Activated CD8-positive, alpha-beta T cell treated with anti-CD3 and anti-CD28 coated beads for 36 hours (primary cell): ENCODE measurements at regions of chr13 and their contacts with region 1.

Region 1: DNA sequence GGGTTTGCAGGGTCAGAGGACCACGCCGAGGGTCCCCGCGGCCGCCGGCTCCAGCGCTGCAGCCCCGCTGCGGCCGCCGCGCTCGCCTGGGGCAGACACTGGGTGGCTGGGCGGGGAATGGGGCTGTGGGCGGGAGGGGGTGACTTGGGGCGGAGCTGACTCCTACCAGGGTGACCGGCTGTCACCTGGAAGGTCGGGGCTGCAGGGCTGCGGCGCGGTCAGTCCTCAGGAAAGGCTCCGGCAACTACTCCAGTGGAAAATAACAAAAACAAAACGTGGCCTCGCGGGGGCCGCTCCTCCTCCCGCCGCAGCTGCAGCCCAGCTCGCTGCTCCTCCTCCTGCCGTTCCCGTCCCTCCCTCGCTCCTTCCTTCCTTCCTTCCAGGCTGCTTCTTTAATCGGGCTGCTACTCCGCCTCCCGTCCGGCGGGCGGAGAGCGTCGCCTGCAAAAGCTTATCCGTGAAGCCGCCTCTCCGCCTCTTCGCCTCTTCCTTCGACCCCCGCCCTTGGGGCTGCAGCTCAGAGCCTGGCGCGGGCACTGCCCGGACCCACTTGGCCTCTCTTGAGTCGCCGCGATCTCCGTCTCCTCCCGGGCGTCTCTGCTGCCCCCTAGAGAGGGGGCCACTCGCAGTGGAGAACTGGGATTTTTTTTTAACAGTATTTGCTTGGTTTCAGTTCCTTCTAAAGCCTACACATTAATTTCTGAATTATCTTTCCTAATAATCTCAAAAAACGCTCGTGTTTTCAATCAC is at the start of gene TBC1D4:
- DNase-seq: peak; percentile 79
- ATAC-seq: peak; percentile 81
- H3K4me3 Mint-ChIP-seq: peak within 1 kb of the TSS; percentile 91
- H3K27ac Mint-ChIP-seq: peak within 1 kb of the TSS; percentile 28
- H3K4me1 Mint-ChIP-seq: peaks cover 19% of the 10 kb centered on the region
- H3K27me3 Mint-ChIP-seq: peaks cover 50% of the 10 kb centered on the region
- CTCF ChIP-seq: peak; percentile 75
- total RNA-seq, gene TBC1D4: 50.4 to 53.3 TPM

Region 2: GRCh38 chr13:75365724-75366173 is 116.5 kb before region 1 on chr13:
- CTCF ChIA-PET with region 1: interaction called, 4 read pairs
- POLR2A ChIA-PET with region 1: no interaction called
- intact Hi-C with region 1: loop called (anchors 5 kb)
- DNase-seq: peak; percentile 51
- ATAC-seq: peak; percentile 94
- H3K4me3 Mint-ChIP-seq: peak overlapping the region; percentile 58
- H3K27ac Mint-ChIP-seq: peak overlapping the region; percentile 94
- H3K4me1 Mint-ChIP-seq: peaks cover 49% of the 10 kb centered on the region
- H3K27me3 Mint-ChIP-seq: no peaks in the 10 kb centered on the region
- CTCF ChIP-seq: no peak

Region 3: GRCh38 chr13:75549262-75550158 is 67.3 kb after region 1 on chr13 and contains the start of gene UCHL3:
- CTCF ChIA-PET with region 1: interaction called, 8 read pairs
- POLR2A ChIA-PET with region 1: no interaction called
- intact Hi-C with region 1: loop called (anchors 5 kb)
- DNase-seq: peak; percentile 98
- ATAC-seq: peak; percentile 96
- H3K4me3 Mint-ChIP-seq: peak within 1 kb of the TSS; percentile 92
- H3K27ac Mint-ChIP-seq: peak within 1 kb of the TSS; percentile 97
- H3K4me1 Mint-ChIP-seq: peaks cover 41% of the 10 kb centered on the region
- H3K27me3 Mint-ChIP-seq: no peaks in the 10 kb centered on the region
- CTCF ChIP-seq: peak; percentile 90
- total RNA-seq, gene UCHL3: 32.9 to 36.4 TPM

Region 4: GRCh38 chr13:75749407-75749806 is 267.2 kb after region 1 on chr13:
- CTCF ChIA-PET with region 1: no interaction called
- POLR2A ChIA-PET with region 1: no interaction called
- intact Hi-C with region 1: no loop called
- DNase-seq: no peak
- ATAC-seq: no peak
- H3K4me3 Mint-ChIP-seq: no peak overlapping the region
- H3K27ac Mint-ChIP-seq: no peak overlapping the region
- H3K4me1 Mint-ChIP-seq: peaks cover 2% of the 10 kb centered on the region
- H3K27me3 Mint-ChIP-seq: no peaks in the 10 kb centered on the region
- CTCF ChIP-seq: no peak